Activated T-helper 1 cell treated with anti-CD3 and anti-CD28 coated beads, Interleukin-12 subunit alpha, Interleukin-12 subunit beta, Interleukin-2, Interleukin-4 antibody, amounts not matched to agents 30 ng/mL and 10 ng/mL and 1 ng/mL, durations not matched to agents 14 hours and 24 hours and 36 hours (primary cell): ENCODE measurements at regions of chr4 and their contacts with region 1.

Region 1: DNA sequence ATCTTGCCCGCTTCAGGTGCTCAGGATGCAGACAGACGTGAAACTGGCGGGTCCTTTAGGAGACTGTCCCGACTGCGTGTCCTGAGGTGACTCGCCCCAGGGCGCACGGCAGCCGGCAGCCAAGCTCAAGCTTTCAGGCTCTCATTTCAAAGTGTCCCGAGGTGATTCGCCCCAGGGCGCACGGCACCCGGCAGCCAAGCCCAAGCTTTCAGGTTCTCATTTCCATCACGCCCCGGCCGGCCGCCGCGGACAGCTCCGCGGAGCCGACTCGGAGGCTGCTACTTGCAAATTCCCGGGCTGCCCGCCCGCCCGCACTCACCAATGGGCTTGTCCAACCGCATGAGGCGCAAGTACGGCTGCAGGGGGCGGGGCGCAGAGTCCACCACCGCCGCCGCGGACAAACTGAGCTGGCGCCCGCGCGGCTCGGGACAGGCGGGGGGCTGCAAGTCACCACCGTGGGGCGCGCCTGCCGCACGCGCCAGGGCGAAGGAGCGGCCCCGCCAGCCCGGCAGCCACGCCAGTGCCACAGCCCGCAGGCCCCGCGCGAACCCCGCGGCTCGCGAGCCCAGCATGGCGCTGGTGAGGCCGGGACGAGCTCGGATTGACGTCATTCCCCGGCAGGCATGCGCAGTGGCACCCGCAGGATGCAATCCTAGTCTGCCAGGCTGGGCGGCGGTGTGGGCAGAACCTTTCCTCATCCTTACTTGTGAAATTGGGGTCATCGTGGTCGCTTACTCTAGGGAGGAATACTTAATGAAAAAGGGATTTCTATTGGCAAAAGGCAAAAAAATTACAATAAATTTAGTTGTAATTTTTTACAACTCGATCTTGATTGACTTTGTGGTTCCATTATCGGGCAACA is at the start of gene COQ2:
- DNase-seq: peak; percentile 93
- H3K4me3 Mint-ChIP-seq: peak within 1 kb of the TSS; percentile 97
- H3K27ac Mint-ChIP-seq: peak within 1 kb of the TSS; percentile 99
- H3K4me1 Mint-ChIP-seq: peaks cover 48% of the 10 kb centered on the region
- H3K27me3 Mint-ChIP-seq: no peaks in the 10 kb centered on the region
- total RNA-seq, gene COQ2: 22.5 and 22.6 TPM in 2 replicates

Region 2: DNA sequence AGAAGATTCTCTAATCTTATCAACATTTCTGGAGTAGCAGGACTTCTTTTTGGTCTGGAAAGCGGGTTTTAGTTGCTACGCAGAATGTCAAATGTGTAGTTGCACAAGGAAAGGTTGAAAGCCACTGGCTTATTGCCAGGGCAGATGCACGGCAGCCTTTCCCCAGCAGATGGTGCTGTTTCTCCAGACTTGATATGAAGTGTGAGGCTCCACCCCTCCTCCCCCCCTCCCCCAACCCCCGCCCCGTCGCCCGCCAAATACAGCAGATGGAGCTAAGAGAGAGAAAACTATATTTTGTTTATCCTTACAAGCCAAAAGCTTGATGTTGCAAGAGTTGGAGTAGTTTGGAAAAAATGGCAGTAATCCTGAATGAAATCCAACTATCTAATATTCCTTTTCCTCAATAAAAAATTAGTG is 822.0 kb before region 1 on chr4:
- intact Hi-C with region 1: loop called (anchors 10 kb)
- DNase-seq: peak; percentile 65
- H3K4me3 Mint-ChIP-seq: no peak overlapping the region
- H3K27ac Mint-ChIP-seq: no peak overlapping the region
- H3K4me1 Mint-ChIP-seq: peaks cover 5% of the 10 kb centered on the region
- H3K27me3 Mint-ChIP-seq: no peaks in the 10 kb centered on the region

Region 3: DNA sequence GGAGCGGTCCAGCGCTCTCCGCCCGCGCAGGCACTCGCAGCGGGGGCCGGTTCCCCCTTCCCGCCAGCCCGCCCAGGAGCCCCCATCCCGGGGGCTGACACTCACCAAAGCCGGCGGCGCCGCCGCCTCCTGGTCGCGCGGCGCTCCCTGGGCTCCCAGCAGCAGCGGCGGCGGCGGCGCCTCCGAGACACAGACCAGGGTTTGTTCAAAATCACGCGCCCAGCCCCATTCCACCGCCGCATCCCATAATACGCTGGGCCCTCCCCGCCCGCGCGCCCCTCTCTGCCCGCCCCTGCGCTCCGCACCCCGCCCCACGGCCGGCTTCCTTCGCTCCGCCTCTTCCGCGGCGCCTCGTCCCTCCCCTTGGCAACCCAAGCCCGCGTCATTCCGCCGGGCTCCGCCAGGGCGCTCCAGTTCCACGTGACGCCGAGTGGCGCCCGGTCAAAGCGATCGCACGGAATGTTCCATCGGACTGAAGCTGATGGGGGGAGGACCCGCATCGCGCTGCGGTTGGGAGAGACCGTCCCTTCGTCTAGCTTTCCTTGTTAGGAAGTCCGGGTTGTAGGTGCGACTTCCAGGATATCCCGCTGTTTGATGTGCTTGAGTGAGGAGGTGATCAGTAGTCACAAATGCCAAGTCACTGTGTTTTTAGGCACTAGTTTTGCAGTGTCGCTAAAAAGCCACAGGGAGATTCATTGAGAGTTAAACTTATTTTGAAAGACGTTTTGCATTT is 271.6 kb before region 1 on chr4:
- intact Hi-C with region 1: loop called (anchors 1 kb)
- DNase-seq: peak; percentile 97
- H3K4me3 Mint-ChIP-seq: peak overlapping the region; percentile 91
- H3K27ac Mint-ChIP-seq: peak overlapping the region; percentile 92
- H3K4me1 Mint-ChIP-seq: peaks cover 45% of the 10 kb centered on the region
- H3K27me3 Mint-ChIP-seq: no peaks in the 10 kb centered on the region

Region 4: GRCh38 chr4:83074086-83074704 is 210.2 kb before region 1 on chr4:
- intact Hi-C with region 1: loop called (anchors 1 kb)
- DNase-seq: peak; percentile 66
- H3K4me3 Mint-ChIP-seq: no peak overlapping the region
- H3K27ac Mint-ChIP-seq: peak overlapping the region; percentile 19
- H3K4me1 Mint-ChIP-seq: peaks cover 29% of the 10 kb centered on the region
- H3K27me3 Mint-ChIP-seq: no peaks in the 10 kb centered on the region

Region 5: GRCh38 chr4:83387753-83388676 is 103.6 kb after region 1 on chr4:
- intact Hi-C with region 1: loop called (anchors 1 kb)
- DNase-seq: peak; percentile 20
- H3K4me3 Mint-ChIP-seq: no peak overlapping the region
- H3K27ac Mint-ChIP-seq: no peak overlapping the region
- H3K4me1 Mint-ChIP-seq: peaks cover 11% of the 10 kb centered on the region
- H3K27me3 Mint-ChIP-seq: no peaks in the 10 kb centered on the region

Region 6: GRCh38 chr4:83639849-83640493 is 355.5 kb after region 1 on chr4:
- intact Hi-C with region 1: loop called (anchors 2 kb)
- DNase-seq: peak; percentile 31
- H3K4me3 Mint-ChIP-seq: no peak overlapping the region
- H3K27ac Mint-ChIP-seq: no peak overlapping the region
- H3K4me1 Mint-ChIP-seq: peaks cover 4% of the 10 kb centered on the region
- H3K27me3 Mint-ChIP-seq: peaks cover 6% of the 10 kb centered on the region

Region 7: DNA sequence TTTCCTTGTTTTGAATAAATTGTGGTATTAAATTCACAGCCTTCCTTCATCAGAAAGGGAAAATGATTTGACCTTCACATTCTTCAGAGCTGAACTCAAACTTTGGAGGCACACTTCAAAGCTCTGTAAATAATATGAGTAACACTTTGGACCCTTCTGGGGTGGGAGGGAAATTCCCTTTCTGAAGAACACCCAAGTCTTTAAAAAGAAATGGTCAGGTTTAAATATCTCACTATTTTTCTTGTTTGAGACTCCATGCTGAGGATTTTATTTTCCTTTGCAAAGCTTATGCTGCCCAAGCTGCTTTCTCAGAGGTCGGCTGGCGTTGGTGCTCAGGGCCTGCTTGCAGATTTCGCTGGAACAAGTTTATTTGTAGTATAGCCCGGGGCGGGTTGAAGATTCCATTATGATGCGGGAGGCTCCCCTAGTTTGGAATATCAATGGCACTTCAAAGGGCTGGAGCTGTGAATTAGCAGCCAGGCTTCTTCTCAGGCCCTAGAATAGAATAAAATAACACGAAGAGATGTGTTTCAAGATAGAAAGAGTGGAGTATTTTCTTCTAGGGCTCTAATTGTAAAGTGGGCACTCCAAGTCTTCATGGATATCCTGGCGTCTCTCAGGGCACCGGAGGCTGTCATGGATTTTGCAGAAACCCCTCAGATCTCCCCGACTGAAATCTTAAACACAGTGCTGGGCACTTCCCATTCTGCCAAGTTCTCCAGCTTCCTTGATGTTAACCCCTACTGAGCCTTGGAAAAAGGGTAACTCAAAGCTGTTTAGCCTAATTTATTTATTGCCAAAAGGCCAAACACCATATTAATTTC is 567.0 kb after region 1 on chr4:
- intact Hi-C with region 1: no loop called
- DNase-seq: no peak
- H3K4me3 Mint-ChIP-seq: no peak overlapping the region
- H3K27ac Mint-ChIP-seq: no peak overlapping the region
- H3K4me1 Mint-ChIP-seq: no peaks in the 10 kb centered on the region
- H3K27me3 Mint-ChIP-seq: no peaks in the 10 kb centered on the region